Activated CD4-positive, alpha-beta T cell treated with anti-CD3 and anti-CD28 coated beads, Interleukin-2, amount 10 ng/mL, durations not matched to agents 24 days and 14 days (primary cell): ENCODE measurements at regions of chr21 and their contacts with region 1.

Region 1: GRCh38 chr21:36319765-36320420 is at the start of gene MORC3:
- DNase-seq: peak; percentile 99
- H3K4me3 Mint-ChIP-seq: peak within 1 kb of the TSS; percentile 87
- H3K27ac Mint-ChIP-seq: peak within 1 kb of the TSS; percentile 98
- H3K4me1 Mint-ChIP-seq: peaks cover 24% of the 10 kb centered on the region
- H3K27me3 Mint-ChIP-seq: no peaks in the 10 kb centered on the region
- total RNA-seq, gene MORC3: 24.8 and 24.9 TPM in 2 replicates

Region 2: GRCh38 chr21:36135391-36136102 is 184.3 kb before region 1 on chr21:
- intact Hi-C with region 1: loop called (anchors 1 kb)
- DNase-seq: peak; percentile 93
- H3K4me3 Mint-ChIP-seq: peak overlapping the region; percentile 95
- H3K27ac Mint-ChIP-seq: peak overlapping the region; percentile 97
- H3K4me1 Mint-ChIP-seq: peaks cover 25% of the 10 kb centered on the region
- H3K27me3 Mint-ChIP-seq: peaks cover 4% of the 10 kb centered on the region

Region 3: DNA sequence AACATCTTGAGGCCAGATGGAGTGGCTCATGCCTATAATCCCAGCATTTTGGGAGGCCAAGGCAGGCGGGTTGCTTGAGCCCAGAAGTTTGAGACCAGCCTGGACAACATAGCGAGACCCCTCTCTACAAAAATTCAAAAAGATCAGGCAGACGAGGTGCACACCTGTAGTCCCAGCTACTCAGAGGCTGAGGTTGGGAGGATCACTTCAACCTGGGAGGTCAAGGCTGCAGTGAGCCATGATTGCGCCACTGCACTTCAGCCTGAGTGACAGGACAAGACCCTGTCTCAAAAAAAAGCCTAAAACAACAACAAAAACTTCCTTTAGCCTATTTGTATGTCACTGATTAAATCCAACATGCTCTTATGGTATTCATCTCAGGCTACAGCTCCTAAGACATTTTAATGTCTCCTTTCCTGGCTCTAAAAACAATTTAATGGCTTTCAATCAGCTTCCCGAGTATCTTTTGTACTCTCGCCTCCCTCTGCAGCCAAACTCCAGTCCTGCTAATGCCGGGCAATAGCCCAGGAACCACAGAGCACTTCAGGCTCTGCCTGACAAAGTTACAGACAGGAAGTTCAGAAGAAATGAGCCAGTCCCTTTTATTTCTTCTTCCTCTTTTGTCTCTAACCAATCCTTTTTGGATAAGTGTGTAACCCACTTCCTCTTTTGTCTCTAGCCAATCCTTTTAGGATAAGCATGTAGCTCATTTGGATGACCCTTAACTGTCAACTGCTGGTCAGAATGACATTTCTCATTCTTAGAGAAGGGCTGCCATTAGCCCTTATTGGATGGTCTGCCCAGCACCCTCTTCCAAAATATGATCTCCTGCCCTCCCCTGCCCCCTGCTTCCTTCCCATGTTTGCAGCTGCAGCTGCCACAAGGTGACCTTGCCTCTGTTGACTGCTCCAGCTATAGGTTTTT is 169.8 kb before region 1 on chr21:
- intact Hi-C with region 1: no loop called
- DNase-seq: peak; percentile 66
- H3K4me3 Mint-ChIP-seq: no peak overlapping the region
- H3K27ac Mint-ChIP-seq: peak overlapping the region; percentile 68
- H3K4me1 Mint-ChIP-seq: peaks cover 28% of the 10 kb centered on the region
- H3K27me3 Mint-ChIP-seq: peaks cover 7% of the 10 kb centered on the region

Region 4: DNA sequence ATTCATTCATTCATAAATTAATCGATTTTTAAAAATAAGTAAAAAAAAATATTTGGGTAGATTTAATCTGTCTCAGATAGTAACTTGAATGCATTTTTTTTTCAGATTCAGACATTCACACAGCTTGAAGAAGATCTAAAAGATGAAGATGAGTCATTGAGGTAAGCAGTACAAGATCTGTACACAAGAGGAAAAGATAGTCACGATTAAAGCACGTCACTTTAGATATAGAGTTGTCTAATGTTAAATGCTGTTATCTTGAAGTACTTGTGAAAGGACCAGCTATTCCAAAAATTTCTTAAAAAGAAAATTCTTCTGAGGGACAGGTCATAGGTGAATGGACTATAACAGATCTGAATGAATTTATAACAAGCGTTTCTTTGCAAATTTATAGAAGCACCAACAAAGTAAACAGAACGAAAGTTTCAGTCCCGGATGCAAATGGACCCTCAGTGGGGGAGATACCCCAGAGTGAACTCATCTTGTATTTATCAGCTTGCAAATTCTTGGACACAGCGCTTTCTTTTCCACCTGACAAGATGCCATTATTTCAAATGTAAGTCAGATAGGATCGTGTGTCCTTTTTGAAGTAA is 31.1 kb before region 1 on chr21:
- intact Hi-C with region 1: loop called (anchors 1 kb)
- DNase-seq: no peak
- H3K4me3 Mint-ChIP-seq: peak overlapping the region; percentile 65
- H3K27ac Mint-ChIP-seq: peak overlapping the region; percentile 89
- H3K4me1 Mint-ChIP-seq: peaks cover 18% of the 10 kb centered on the region
- H3K27me3 Mint-ChIP-seq: no peaks in the 10 kb centered on the region

Region 5: DNA sequence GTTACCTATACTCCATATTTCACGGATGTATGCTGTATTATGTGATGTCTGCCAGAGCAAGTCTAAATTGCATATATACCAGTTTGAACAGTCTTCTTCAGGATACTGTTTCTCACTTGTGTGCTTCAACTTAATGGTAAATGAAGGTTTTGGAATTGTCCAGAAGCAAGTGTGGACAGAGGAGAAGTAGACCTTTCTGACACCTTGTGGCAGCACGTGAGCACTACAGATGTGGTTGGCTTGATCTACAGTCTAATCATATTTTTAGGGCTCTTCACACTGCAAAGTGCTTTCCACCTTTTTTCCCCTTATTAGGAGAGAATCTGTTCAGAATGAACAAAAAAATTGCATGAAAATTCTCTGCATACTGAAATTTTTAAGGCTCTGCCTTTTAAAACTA is 11.0 kb after region 1 on chr21:
- intact Hi-C with region 1: no loop called
- DNase-seq: peak; percentile 83
- H3K4me3 Mint-ChIP-seq: no peak overlapping the region
- H3K27ac Mint-ChIP-seq: peak overlapping the region; percentile 31
- H3K4me1 Mint-ChIP-seq: peaks cover 27% of the 10 kb centered on the region
- H3K27me3 Mint-ChIP-seq: no peaks in the 10 kb centered on the region

Region 6: DNA sequence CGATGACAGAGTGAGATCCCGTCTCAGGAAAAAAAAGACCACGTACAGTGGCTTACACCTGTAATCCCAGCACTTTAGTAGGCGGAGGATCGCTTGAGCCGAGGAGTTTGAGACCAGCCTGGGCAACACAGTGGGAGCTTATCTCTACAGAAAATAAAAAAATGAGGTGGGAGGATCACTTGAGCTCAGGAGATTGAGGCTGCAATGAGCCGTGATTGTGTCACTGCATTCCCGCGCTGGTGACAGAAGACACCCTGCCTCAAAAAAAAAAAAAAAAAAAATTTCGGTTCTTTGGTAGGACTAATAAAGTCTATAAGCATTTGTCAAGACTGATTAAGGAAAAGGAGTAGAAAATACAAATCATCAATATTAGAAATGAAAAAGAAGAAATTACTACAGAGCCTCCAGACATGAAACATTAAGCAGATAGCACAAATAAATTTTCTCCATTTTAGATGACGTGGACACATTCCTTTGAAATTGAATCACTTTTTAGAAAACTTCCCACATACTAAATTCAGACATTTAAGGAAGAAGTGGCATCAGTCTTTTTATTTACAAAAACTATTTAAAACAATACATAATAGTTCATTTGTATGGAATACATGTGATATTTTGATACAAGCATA is 30.5 kb after region 1 on chr21:
- intact Hi-C with region 1: no loop called
- DNase-seq: no peak
- H3K4me3 Mint-ChIP-seq: no peak overlapping the region
- H3K27ac Mint-ChIP-seq: no peak overlapping the region
- H3K4me1 Mint-ChIP-seq: peaks cover 5% of the 10 kb centered on the region
- H3K27me3 Mint-ChIP-seq: no peaks in the 10 kb centered on the region

Region 7: GRCh38 chr21:36966066-36966820 is 646.4 kb after region 1 on chr21 and contains the start of gene HLCS:
- intact Hi-C with region 1: loop called (anchors 2 kb)
- DNase-seq: peak; percentile 92
- H3K4me3 Mint-ChIP-seq: peak within 1 kb of the TSS; percentile 86
- H3K27ac Mint-ChIP-seq: peak within 1 kb of the TSS; percentile 91
- H3K4me1 Mint-ChIP-seq: peaks cover 14% of the 10 kb centered on the region
- H3K27me3 Mint-ChIP-seq: no peaks in the 10 kb centered on the region
- total RNA-seq, gene HLCS: 15.3 and 16.5 TPM in 2 replicates